ENCODE measurements at regions of chr17 and their contacts with region 1.

Region 1: GRCh38 chr17:40443583-40444327 is 505 bp downstream of the IGFBP4 start:
- DNase-seq: peak in 1 of 2 experiments; percentile 85
- H3K4me3 ChIP-seq: peak overlapping the region; percentile 36 to 68 (median 64)
- H3K27ac ChIP-seq: peak overlapping the region; percentile 30; the same call in 1 of the 2 replicates
- H3K4me1 ChIP-seq: peaks cover 5 to 24% (median 13%) of the 10 kb centered on the region in 4 experiments
- H3K27me3 ChIP-seq: peaks cover 0 to 4% (median 0%) of the 10 kb centered on the region in 4 experiments; a peak in 3 of 7 replicates
- CTCF ChIP-seq: peak; percentile 46 to 58 (median 57)
- EP300 ChIP-seq: no peak
- POLR2A ChIP-seq: no peak
- RAD21 ChIP-seq: peak; percentile 28 to 52; a peak in 3 of 4 replicates

Region 2: GRCh38 chr17:40417609-40418427 is 25.9 kb before region 1 on chr17 and contains the start of gene TOP2A:
- CTCF ChIA-PET with region 1: interaction called, 32 read pairs
- POLR2A ChIA-PET with region 1: interaction called, 20 read pairs
- DNase-seq: peak; percentile 98 to 99
- H3K4me3 ChIP-seq: peak within 1 kb of the TSS; percentile 81 to 97 (median 95)
- H3K27ac ChIP-seq: peak within 1 kb of the TSS; percentile 55; the same call in 1 of the 2 replicates
- H3K4me1 ChIP-seq: peaks cover 2 to 10% (median 6%) of the 10 kb centered on the region in 4 experiments
- H3K27me3 ChIP-seq: no peaks in the 10 kb centered on the region
- CTCF ChIP-seq: no peak
- EP300 ChIP-seq: no peak
- POLR2A ChIP-seq: 0 out of 3 replicates have a peak, but pooled peaks of 1 of the 2 experiments have one; percentile 53
- RAD21 ChIP-seq: no peak
- total RNA-seq, gene TOP2A: 276 and 291 TPM in 2 replicates

Region 3: DNA sequence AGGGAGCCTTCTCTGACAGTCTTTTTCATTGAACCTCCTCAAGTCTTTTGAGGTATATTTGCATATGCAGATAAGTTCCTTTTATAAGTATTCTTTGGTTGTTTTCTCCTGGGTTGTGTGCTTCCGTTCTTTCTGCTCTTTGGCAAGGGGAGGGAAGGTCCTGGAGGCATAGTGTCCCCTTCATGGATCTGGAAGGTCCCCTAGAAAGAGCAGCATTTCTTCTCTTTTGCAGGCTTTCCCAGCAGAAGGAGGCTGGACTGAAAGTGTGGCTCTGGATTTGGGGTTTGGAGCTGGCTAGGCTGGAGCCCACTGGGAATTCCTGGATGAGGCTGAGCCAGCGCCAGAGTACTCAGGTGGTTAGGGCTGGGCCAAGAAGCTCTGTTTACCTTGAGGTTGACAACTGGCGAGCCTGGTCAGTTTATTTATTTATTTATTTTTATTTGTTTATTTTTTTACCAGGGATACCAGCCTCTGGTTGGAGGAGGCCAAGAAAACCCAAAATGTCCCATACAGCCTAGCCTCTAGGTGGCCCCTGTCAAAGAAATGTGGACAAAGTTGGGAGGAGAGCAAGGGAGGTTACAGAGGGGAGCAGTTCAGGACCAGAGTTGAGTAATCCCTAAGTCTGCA is 20.7 kb before region 1 on chr17:
- CTCF ChIA-PET with region 1: interaction called, 50 read pairs
- POLR2A ChIA-PET with region 1: interaction called, 20 read pairs
- DNase-seq: peak in 1 of 2 experiments; percentile 73
- H3K4me3 ChIP-seq: peak overlapping the region in 1 of 4 experiments; percentile 11; a peak in 1 of 8 replicates
- H3K27ac ChIP-seq: no peak overlapping the region
- H3K4me1 ChIP-seq: peaks cover 4 to 21% (median 10%) of the 10 kb centered on the region in 4 experiments
- H3K27me3 ChIP-seq: no peaks in the 10 kb centered on the region
- CTCF ChIP-seq: peak; percentile 1 to 16 (median 4); a peak in 3 of 4 replicates
- EP300 ChIP-seq: no peak; a peak in 1 of 3 replicates
- POLR2A ChIP-seq: no peak
- RAD21 ChIP-seq: no peak

Region 4: GRCh38 chr17:40461732-40462342 is 18.1 kb after region 1 on chr17:
- CTCF ChIA-PET with region 1: interaction called, 739 read pairs
- POLR2A ChIA-PET with region 1: interaction called, 20 read pairs
- DNase-seq: no peak
- H3K4me3 ChIP-seq: no peak overlapping the region
- H3K27ac ChIP-seq: no peak overlapping the region
- H3K4me1 ChIP-seq: peaks cover 2 to 39% (median 16%) of the 10 kb centered on the region in 4 experiments
- H3K27me3 ChIP-seq: no peaks in the 10 kb centered on the region
- CTCF ChIP-seq: no peak
- EP300 ChIP-seq: no peak
- POLR2A ChIP-seq: no peak
- RAD21 ChIP-seq: no peak

Region 5: DNA sequence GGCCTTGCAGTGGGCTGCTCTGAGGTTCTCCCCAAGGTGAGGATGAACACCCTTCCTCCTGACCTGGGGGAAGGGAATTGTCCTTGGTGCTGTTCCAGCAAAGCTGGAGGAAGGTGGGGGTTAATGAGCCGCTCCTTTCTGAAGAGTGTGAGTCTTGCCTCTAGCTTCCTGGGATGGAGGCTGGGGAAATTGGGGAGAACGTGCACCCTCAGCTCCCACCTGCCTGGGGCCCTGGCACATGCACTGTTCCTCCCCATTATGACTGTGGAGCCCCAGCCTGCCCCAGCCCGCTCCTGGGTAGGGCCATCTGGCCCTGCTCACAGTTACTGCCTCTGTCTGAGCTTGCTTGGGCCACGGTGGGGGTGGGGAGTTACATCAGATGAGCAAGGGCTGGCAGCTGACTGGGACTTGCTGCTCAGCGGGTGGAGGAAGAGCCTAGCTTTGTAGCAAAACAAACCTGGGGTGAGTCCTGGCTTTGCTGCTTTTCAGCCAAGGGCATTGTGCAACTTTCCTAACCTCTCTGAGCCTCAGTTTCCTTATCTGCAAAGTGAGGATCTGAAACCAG is 46.6 kb after region 1 on chr17:
- CTCF ChIA-PET with region 1: interaction called, 15 read pairs
- POLR2A ChIA-PET with region 1: interaction called, 5 read pairs
- DNase-seq: peak in 1 of 2 experiments; percentile 69
- H3K4me3 ChIP-seq: peak overlapping the region in 1 of 4 experiments; percentile 8; a peak in 1 of 8 replicates
- H3K27ac ChIP-seq: peak overlapping the region; percentile 41; the same call in 1 of the 2 replicates
- H3K4me1 ChIP-seq: peaks cover 9 to 26% (median 24%) of the 10 kb centered on the region in 4 experiments
- H3K27me3 ChIP-seq: no peaks in the 10 kb centered on the region; a peak in 1 of 7 replicates
- CTCF ChIP-seq: no peak
- EP300 ChIP-seq: no peak
- POLR2A ChIP-seq: peak in 1 of 2 experiments; percentile 41; a peak in 1 of 3 replicates
- RAD21 ChIP-seq: no peak

Region 6: GRCh38 chr17:40536295-40537171 is 92.8 kb after region 1 on chr17:
- CTCF ChIA-PET with region 1: interaction called, 435 read pairs
- POLR2A ChIA-PET with region 1: interaction called, 4 read pairs
- DNase-seq: no peak
- H3K4me3 ChIP-seq: no peak overlapping the region
- H3K27ac ChIP-seq: no peak overlapping the region
- H3K4me1 ChIP-seq: peaks cover 0 to 8% (median 1%) of the 10 kb centered on the region in 4 experiments; a peak in 2 of 7 replicates
- H3K27me3 ChIP-seq: no peaks in the 10 kb centered on the region; a peak in 1 of 7 replicates
- CTCF ChIP-seq: no peak
- EP300 ChIP-seq: no peak
- POLR2A ChIP-seq: no peak
- RAD21 ChIP-seq: no peak

Region 7: GRCh38 chr17:40576225-40576651 is 132.5 kb after region 1 on chr17:
- CTCF ChIA-PET with region 1: no interaction called
- POLR2A ChIA-PET with region 1: no interaction called
- DNase-seq: no peak
- H3K4me3 ChIP-seq: no peak overlapping the region
- H3K27ac ChIP-seq: no peak overlapping the region
- H3K4me1 ChIP-seq: no peaks in the 10 kb centered on the region
- H3K27me3 ChIP-seq: no peaks in the 10 kb centered on the region
- CTCF ChIP-seq: no peak
- EP300 ChIP-seq: no peak
- POLR2A ChIP-seq: no peak
- RAD21 ChIP-seq: no peak

Measured in H1 (cell line).